ENCODE measurements at regions of chr7 and their contacts with region 1.

Region 1: GRCh38 chr7:128209229-128210035 is 31.6 kb upstream of the LEP start:
- DNase-seq: peak; percentile 93
- H3K4me3 ChIP-seq: no peak overlapping the region
- H3K27ac ChIP-seq: no peak overlapping the region
- H3K4me1 ChIP-seq: peaks cover 0 to 3% of the 10 kb centered on the region in 2 experiments; a peak in 1 of 4 replicates
- H3K27me3 ChIP-seq: no peaks in the 10 kb centered on the region
- CTCF ChIP-seq: peak; percentile 99
- EP300 ChIP-seq: no peak
- RAD21 ChIP-seq: peak; percentile 100

Region 2: GRCh38 chr7:127699852-127700251 is 509.6 kb before region 1 on chr7:
- CTCF ChIA-PET with region 1: interaction called, 444 read pairs
- POLR2A ChIA-PET with region 1: no interaction called
- DNase-seq: no peak
- H3K4me3 ChIP-seq: no peak overlapping the region
- H3K27ac ChIP-seq: no peak overlapping the region
- H3K4me1 ChIP-seq: peaks cover 0 to 7% of the 10 kb centered on the region in 2 experiments; a peak in 1 of 4 replicates
- H3K27me3 ChIP-seq: no peaks in the 10 kb centered on the region
- CTCF ChIP-seq: no peak
- EP300 ChIP-seq: no peak
- RAD21 ChIP-seq: no peak

Region 3: DNA sequence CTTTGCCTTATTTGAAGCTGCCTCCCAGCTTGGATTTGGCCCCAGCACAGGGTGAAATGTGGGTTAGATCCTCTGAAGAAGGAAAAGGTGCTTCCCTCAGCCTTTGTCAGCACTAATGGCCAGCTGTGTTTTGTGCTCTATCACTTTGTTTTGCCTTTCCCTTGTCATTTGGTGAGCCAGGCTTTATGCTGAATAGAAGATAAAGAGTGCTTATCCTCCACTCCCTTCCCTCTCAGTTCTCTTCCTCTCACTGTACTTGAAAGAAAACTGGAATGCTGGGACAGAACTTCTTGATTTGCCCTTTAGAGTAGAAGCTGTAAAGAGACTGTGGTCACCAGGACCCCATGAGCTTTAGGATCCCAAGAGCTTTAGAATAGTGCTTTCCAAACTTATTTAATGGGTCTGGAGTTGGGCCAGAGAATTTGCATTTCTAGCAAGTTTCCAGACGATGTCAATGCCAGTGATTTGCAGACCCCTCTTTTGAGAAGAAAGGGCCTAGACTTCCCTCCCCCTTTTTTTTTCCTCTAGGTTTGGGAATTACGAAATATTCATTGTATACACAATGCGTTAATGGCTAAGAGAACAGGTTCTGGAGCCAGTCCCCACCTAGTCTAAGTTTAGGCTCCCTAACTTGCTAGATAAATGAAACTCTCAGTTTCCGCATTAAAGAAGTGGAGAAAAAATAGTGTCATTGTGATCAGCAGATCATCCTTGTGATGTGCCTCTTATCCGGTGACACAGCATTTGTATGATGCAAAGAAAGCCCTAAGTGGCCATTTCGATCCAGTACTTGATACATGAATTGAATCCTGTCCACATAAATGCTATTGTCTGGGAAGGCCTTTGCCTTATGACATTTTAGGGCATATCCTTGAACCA is 259.5 kb before region 1 on chr7:
- CTCF ChIA-PET with region 1: interaction called, 13 read pairs
- POLR2A ChIA-PET with region 1: no interaction called
- DNase-seq: no peak
- H3K4me3 ChIP-seq: no peak overlapping the region
- H3K27ac ChIP-seq: no peak overlapping the region
- H3K4me1 ChIP-seq: peaks cover 24 to 39% of the 10 kb centered on the region in 2 experiments
- H3K27me3 ChIP-seq: no peaks in the 10 kb centered on the region
- CTCF ChIP-seq: no peak
- EP300 ChIP-seq: no peak
- RAD21 ChIP-seq: no peak

Region 4: GRCh38 chr7:128060018-128060417 is 149.4 kb before region 1 on chr7:
- CTCF ChIA-PET with region 1: interaction called, 14 read pairs
- POLR2A ChIA-PET with region 1: no interaction called
- DNase-seq: no peak
- H3K4me3 ChIP-seq: no peak overlapping the region
- H3K27ac ChIP-seq: no peak overlapping the region
- H3K4me1 ChIP-seq: peaks cover 6 to 19% of the 10 kb centered on the region in 2 experiments; a peak in 3 of 4 replicates
- H3K27me3 ChIP-seq: no peaks in the 10 kb centered on the region
- CTCF ChIP-seq: no peak
- EP300 ChIP-seq: no peak
- RAD21 ChIP-seq: no peak

Region 5: DNA sequence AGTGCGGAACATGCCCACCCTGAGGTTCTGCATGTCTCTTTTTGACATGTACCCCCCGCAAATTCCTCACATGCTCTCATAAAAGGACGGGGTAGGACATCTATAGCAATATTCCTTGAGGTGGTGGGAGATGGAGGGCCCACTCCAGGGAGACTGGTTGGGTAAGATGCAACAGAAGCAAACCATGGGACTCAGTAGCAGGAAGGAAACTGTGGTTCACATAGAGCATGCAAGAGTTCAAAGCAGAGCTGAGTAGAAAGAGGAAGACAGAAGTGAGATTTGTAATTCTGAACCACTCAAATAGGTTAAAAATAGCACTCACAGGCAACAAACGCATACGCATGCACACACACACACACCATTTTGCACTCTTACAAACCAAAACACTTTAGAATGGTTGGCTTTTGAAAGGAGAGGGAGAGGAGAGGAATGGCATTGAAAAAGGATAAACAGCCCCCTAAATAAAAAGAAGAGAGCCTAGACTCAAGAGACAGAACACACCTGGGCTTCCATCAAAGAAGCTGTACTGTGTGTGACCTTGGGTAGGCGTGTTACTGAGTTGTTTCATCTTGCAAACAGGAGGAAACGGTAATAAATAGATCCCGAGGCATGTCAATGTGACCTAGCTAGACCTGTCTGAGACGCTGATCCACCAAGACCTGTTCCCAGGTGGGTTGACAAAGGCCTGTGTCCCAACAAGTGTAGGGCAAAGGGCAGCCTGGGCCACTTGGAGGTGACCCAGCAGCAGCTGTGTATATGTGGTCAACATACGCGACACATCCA is 100.6 kb before region 1 on chr7:
- CTCF ChIA-PET with region 1: interaction called, 15 read pairs
- POLR2A ChIA-PET with region 1: no interaction called
- DNase-seq: no peak
- H3K4me3 ChIP-seq: no peak overlapping the region
- H3K27ac ChIP-seq: no peak overlapping the region
- H3K4me1 ChIP-seq: peaks cover 0 to 16% of the 10 kb centered on the region in 2 experiments; a peak in 1 of 4 replicates
- H3K27me3 ChIP-seq: no peaks in the 10 kb centered on the region; the same call in 1 of the 2 replicates
- CTCF ChIP-seq: no peak
- EP300 ChIP-seq: no peak
- RAD21 ChIP-seq: no peak

Region 6: GRCh38 chr7:128161466-128162125 is 47.8 kb before region 1 on chr7:
- CTCF ChIA-PET with region 1: interaction called, 175 read pairs
- POLR2A ChIA-PET with region 1: no interaction called
- DNase-seq: no peak
- H3K4me3 ChIP-seq: no peak overlapping the region
- H3K27ac ChIP-seq: no peak overlapping the region
- H3K4me1 ChIP-seq: peaks cover 2 to 6% of the 10 kb centered on the region in 2 experiments; a peak in 2 of 4 replicates
- H3K27me3 ChIP-seq: no peaks in the 10 kb centered on the region; the same call in 1 of the 2 replicates
- CTCF ChIP-seq: no peak
- EP300 ChIP-seq: no peak
- RAD21 ChIP-seq: no peak

Region 7: DNA sequence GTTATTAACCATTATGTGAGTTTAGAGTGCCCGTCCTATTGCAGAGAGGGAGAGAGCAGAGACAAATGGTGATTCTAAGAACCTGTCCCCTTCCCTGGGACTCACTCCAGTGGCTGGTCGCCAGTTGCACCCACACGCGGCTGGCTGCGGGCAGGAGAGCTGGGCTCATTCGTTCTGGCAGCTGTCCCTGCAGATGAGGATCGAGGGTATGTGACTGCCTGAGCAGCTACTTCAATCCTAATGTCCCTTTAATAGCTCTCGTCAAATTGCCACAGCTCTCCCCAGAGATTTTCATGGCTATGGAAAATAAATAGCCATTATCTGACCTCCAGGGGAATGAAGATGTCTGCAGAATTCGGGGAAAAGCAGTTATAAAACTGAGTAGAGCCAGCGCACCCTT is 92.7 kb after region 1 on chr7:
- CTCF ChIA-PET with region 1: interaction called, 12 read pairs
- POLR2A ChIA-PET with region 1: no interaction called
- DNase-seq: no peak
- H3K4me3 ChIP-seq: no peak overlapping the region
- H3K27ac ChIP-seq: no peak overlapping the region
- H3K4me1 ChIP-seq: no peaks in the 10 kb centered on the region
- H3K27me3 ChIP-seq: no peaks in the 10 kb centered on the region
- CTCF ChIP-seq: no peak
- EP300 ChIP-seq: no peak
- RAD21 ChIP-seq: no peak